ENCODE measurements at regions of chr15 and their contacts with region 1.

Region 1: GRCh38 chr15:99753066-99753465 is 19.8 kb upstream of the LYSMD4 start:
- DNase-seq: no peak
- H3K4me3 ChIP-seq: no peak overlapping the region
- H3K27ac ChIP-seq: no peak overlapping the region
- H3K4me1 ChIP-seq: no peaks in the 10 kb centered on the region
- H3K27me3 ChIP-seq: no peaks in the 10 kb centered on the region
- CTCF ChIP-seq: no peak

Region 2: DNA sequence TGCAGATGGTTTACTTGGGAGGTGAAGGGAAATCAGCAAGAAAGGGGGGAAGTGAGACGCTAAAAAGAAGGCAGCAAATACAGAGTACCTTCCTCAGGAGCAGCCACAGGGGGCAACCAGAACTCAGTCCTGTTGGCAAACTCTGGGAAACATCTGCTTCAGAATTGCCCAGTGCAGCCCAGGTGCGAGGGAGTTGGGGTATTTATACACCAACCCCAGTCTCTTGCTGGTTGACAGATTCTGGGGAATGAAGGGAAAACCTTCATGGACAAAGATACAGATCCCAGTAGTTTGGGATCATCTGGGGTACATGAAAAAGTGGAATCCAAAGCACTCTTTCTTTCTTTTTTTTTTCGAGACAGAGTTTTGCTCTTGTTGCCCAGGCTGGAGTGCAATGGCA is 720.1 kb before region 1 on chr15:
- intact Hi-C with region 1: no loop called
- DNase-seq: no peak
- H3K4me3 ChIP-seq: no peak overlapping the region
- H3K27ac ChIP-seq: no peak overlapping the region
- H3K4me1 ChIP-seq: no peaks in the 10 kb centered on the region
- H3K27me3 ChIP-seq: no peaks in the 10 kb centered on the region
- CTCF ChIP-seq: no peak

Region 3: GRCh38 chr15:99279290-99279689 is 473.8 kb before region 1 on chr15:
- intact Hi-C with region 1: loop called (anchors 2 kb)
- DNase-seq: no peak
- H3K4me3 ChIP-seq: no peak overlapping the region
- H3K27ac ChIP-seq: no peak overlapping the region
- H3K4me1 ChIP-seq: no peaks in the 10 kb centered on the region
- H3K27me3 ChIP-seq: no peaks in the 10 kb centered on the region
- CTCF ChIP-seq: no peak

Region 4: GRCh38 chr15:99507504-99508310 is 245.4 kb before region 1 on chr15:
- intact Hi-C with region 1: no loop called
- DNase-seq: no peak
- H3K4me3 ChIP-seq: no peak overlapping the region
- H3K27ac ChIP-seq: peak overlapping the region; percentile 22
- H3K4me1 ChIP-seq: no peaks in the 10 kb centered on the region
- H3K27me3 ChIP-seq: no peaks in the 10 kb centered on the region
- CTCF ChIP-seq: no peak

Measured in colonic mucosa (tissue), 4 donors.